ENCODE measurements at regions of chr1 and their contacts with region 1.

Region 1: GRCh38 chr1:206912445-206913095 is 9.2 kb downstream of the FCMR start:
- DNase-seq: peak; percentile 96
- H3K4me3 Mint-ChIP-seq: no peak overlapping the region
- H3K27ac Mint-ChIP-seq: no peak overlapping the region
- H3K4me1 Mint-ChIP-seq: peaks cover 28% of the 10 kb centered on the region
- H3K27me3 Mint-ChIP-seq: peaks cover 43% of the 10 kb centered on the region
- CTCF ChIP-seq: peak; percentile 94

Region 2: GRCh38 chr1:206684478-206685333 is 227.9 kb before region 1 on chr1 and contains the start of gene MAPKAPK2:
- CTCF ChIA-PET with region 1: interaction called, 6 read pairs
- POLR2A ChIA-PET with region 1: interaction called, 6 read pairs
- intact Hi-C with region 1: loop called (anchors 5 kb)
- DNase-seq: peak; percentile 83
- H3K4me3 Mint-ChIP-seq: peak within 1 kb of the TSS; percentile 93
- H3K27ac Mint-ChIP-seq: peak within 1 kb of the TSS; percentile 97
- H3K4me1 Mint-ChIP-seq: peaks cover 46% of the 10 kb centered on the region
- H3K27me3 Mint-ChIP-seq: no peaks in the 10 kb centered on the region
- CTCF ChIP-seq: no peak
- total RNA-seq, gene MAPKAPK2: 142 and 178 TPM in 2 replicates

Region 3: DNA sequence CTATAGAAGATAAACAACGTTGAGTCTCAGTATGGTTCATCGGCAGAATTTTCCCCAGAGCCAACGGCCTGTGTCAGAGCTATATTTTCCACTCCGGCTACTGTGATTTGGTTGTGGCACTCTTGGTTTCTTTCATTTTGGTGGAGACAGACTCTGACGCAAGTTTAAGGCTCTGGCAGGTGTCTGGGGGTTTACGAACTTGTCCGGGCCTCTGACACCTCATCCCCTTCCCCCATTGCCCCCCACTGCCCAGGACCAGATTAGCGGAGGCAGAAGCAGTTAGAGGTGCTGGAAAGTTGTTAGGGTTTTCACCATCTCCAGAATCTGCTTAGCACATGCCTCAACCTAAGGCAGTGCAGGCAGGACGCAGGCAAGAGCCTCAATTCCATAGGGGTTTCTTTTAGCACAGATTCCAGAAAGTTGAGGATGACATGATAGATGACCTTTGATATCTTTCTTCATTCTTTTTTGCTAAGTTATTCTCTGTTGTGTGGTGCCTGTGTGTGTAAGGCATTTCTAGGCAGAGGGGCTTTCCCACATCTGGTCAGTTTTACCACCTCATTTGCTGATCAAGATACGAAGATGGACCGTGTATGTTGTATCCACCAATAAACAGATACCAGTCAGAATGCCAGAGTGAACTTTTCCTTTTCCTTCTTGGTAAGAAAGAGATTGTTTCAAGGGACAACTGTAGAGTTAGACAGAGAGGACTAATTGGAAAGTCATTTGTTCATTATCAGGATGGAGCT is 121.9 kb before region 1 on chr1:
- CTCF ChIA-PET with region 1: interaction called, 24 read pairs
- POLR2A ChIA-PET with region 1: no interaction called
- intact Hi-C with region 1: no loop called
- DNase-seq: no peak
- H3K4me3 Mint-ChIP-seq: no peak overlapping the region
- H3K27ac Mint-ChIP-seq: no peak overlapping the region
- H3K4me1 Mint-ChIP-seq: peaks cover 11% of the 10 kb centered on the region
- H3K27me3 Mint-ChIP-seq: peaks cover 32% of the 10 kb centered on the region
- CTCF ChIP-seq: no peak

Region 4: DNA sequence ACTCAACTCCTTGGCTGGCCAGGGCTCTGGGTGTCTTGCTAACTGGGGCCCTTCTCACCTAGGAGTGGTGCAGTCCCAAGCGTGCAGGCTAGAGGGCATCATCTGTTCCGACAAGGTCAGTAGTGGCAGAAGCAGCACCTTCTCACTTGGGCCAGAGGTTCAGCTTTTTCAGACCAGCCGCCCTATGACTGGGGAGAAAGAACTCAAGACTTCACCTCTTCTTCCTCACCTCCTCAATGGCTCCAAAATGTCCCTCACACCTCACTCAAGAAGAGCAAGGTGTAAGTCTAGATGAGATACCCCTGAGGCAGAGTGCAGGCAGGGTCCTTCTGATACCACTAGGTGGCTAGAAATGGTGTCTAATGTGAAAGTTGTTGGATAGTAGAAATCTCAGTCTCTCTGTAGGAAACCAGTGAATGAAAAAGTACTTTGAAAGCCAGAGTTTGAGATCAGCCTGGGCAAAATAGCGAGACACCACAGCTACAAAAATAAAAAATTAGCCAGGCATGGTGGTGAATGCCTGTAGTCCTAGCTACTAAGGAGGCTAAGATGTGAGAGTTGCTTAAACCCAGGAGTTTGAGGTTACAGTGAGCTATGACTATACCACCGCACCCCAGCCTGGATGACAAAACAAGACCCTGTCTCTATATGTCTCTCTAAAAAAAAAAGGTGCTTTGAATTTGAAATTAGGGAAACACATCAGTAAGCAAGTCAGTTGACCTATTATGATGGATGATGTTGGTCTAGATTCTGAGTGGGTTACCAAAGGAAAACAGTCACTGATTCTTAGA is 55.7 kb before region 1 on chr1:
- CTCF ChIA-PET with region 1: interaction called, 89 read pairs
- POLR2A ChIA-PET with region 1: interaction called, 10 read pairs
- intact Hi-C with region 1: no loop called
- DNase-seq: peak; percentile 54
- H3K4me3 Mint-ChIP-seq: no peak overlapping the region
- H3K27ac Mint-ChIP-seq: no peak overlapping the region
- H3K4me1 Mint-ChIP-seq: no peaks in the 10 kb centered on the region
- H3K27me3 Mint-ChIP-seq: peaks cover 18% of the 10 kb centered on the region
- CTCF ChIP-seq: peak; percentile 17

Region 5: GRCh38 chr1:206935491-206936067 is 23.0 kb after region 1 on chr1:
- CTCF ChIA-PET with region 1: interaction called, 16 read pairs
- POLR2A ChIA-PET with region 1: no interaction called
- intact Hi-C with region 1: no loop called
- DNase-seq: peak; percentile 62
- H3K4me3 Mint-ChIP-seq: no peak overlapping the region
- H3K27ac Mint-ChIP-seq: no peak overlapping the region
- H3K4me1 Mint-ChIP-seq: peaks cover 8% of the 10 kb centered on the region
- H3K27me3 Mint-ChIP-seq: no peaks in the 10 kb centered on the region
- CTCF ChIP-seq: peak; percentile 59

Region 6: DNA sequence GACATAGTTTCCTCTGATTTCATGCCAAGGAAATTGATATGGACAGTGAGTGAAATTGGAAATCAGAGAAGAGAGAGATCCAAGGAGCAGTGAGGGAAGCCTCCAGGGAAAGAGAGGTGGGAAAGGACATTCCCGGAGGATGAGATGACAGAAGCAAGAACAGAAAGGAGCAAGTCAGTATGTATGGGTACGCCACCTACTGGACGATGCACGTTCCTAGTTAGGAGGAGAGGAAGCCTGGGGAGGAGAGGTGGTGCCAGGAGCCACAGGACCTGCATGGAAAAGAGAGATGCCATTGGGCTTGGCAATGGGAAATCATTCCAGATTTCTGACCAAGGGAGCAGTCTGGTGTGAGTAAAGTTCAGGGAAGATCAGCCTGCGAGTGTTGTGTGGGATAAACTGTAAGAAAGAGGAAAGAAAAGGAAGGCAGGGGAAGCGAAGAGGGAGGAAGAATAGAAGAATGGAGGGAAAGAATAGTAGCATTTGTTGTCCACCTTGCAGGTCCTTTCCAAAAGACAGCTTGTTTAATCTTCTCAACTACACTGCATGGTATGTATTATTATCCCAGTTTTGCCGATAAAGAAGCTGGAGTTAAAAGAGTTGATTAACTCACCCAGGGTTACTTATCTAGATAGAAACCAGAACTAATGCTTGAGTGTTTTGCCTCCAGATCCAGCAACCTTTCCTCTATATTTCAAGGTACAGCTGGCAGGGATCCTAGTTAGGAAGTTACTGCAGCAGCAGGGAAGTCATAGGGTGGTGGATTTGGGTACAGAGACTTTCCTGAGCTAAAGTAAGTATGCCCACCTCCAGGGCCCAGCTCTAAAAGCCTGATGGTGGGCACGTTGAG is 92.6 kb after region 1 on chr1:
- CTCF ChIA-PET with region 1: interaction called, 17 read pairs
- POLR2A ChIA-PET with region 1: interaction called, 3 read pairs
- intact Hi-C with region 1: no loop called
- DNase-seq: peak; percentile 95
- H3K4me3 Mint-ChIP-seq: peak overlapping the region; percentile 1
- H3K27ac Mint-ChIP-seq: peak overlapping the region; percentile 30
- H3K4me1 Mint-ChIP-seq: peaks cover 58% of the 10 kb centered on the region
- H3K27me3 Mint-ChIP-seq: no peaks in the 10 kb centered on the region
- CTCF ChIP-seq: peak; percentile 85

Region 7: DNA sequence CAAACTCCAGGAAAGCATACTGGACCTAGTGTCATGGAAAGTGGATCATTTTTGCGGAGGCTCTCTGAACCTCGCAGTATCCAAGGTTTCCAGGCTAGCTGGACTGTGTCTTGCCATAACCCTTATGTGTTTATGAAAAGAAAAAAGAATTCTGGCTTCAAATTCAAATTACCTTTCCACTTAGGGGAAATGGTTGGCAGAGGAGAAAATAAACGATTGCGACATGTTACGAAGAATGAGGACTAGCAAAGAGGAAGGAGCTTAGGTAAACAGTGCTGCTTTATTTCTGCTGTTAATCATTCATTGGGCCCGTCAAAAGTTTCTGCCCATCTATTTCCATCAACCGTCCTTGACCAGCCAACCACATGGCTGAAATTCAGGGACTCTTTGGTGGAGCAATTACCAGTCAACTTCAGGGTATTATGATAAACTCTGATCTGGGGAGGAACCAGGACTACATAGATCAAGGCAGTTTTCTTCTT is 191.4 kb after region 1 on chr1 and contains the start of gene C4BPA:
- CTCF ChIA-PET with region 1: no interaction called
- POLR2A ChIA-PET with region 1: no interaction called
- intact Hi-C with region 1: no loop called
- DNase-seq: peak; percentile 40
- H3K4me3 Mint-ChIP-seq: no peak within 1 kb of the TSS
- H3K27ac Mint-ChIP-seq: no peak within 1 kb of the TSS
- H3K4me1 Mint-ChIP-seq: no peaks in the 10 kb centered on the region
- H3K27me3 Mint-ChIP-seq: peaks cover 44% of the 10 kb centered on the region
- CTCF ChIP-seq: no peak
- total RNA-seq, gene C4BPA: not detected in 2 replicates

Measured in MCF 10A (cell line).